CD8-positive, alpha-beta T cell (primary cell): ENCODE measurements at regions of chr12 and their contacts with region 1.

Region 1: GRCh38 chr12:6944381-6945186 is 762 bp downstream of the C12orf57 start:
- DNase-seq: peak; percentile 67 to 94 (median 89)
- ATAC-seq: peak; percentile 51
- H3K4me3 ChIP-seq: peak overlapping the region; percentile 90 to 97
- H3K4me3 Mint-ChIP-seq: peak overlapping the region; percentile 99
- H3K27ac ChIP-seq: peak overlapping the region; percentile 94 to 97
- H3K27ac Mint-ChIP-seq: peak overlapping the region; percentile 100
- H3K4me1 ChIP-seq: peaks cover 56% of the 10 kb centered on the region
- H3K4me1 Mint-ChIP-seq: peaks cover 63% of the 10 kb centered on the region
- H3K27me3 ChIP-seq: no peaks in the 10 kb centered on the region
- H3K27me3 Mint-ChIP-seq: no peaks in the 10 kb centered on the region
- CTCF ChIP-seq: peak; percentile 87

Region 2: DNA sequence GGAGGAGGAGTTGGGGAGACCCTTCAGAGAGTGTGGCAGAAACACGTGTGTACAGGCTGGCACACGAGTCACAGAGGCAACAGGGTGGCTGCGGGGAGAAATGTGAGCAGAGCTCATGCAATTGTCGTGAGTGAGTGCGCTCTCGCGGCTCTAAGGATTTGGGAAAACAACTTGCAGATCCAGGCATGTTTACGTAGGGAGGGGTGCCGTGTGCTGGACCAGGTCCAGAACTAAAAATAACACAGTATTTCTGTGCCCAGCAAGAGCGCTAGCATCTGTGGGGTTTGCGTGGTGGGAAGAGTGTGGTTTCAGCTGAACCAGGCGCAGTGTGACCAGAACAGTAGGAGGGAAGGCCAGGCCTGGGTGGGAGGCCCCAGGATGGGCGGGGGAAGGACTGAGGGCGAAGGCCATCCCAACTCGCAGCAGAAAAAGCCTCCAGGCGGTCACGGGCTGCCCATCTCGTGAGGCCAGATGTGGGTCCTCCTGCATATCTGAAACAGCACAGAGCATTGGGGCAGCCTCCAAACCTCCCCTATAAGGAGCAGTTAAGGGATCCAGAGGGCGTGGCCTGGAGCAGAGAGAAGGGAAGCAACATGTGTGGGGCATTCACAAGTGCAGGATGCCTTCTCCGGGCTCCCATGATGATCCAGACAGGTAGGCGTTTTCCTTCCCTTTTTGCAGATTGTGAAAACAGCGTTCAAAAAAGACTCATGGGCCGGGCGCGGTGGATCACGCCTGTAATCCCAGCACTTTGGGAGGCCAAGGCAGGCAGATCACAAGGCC is 762.3 kb before region 1 on chr12:
- CTCF ChIA-PET with region 1: no interaction called
- POLR2A ChIA-PET with region 1: no interaction called
- intact Hi-C with region 1: no loop called
- DNase-seq: no peak
- ATAC-seq: no peak
- H3K4me3 ChIP-seq: no peak overlapping the region
- H3K4me3 Mint-ChIP-seq: no peak overlapping the region
- H3K27ac ChIP-seq: no peak overlapping the region
- H3K27ac Mint-ChIP-seq: no peak overlapping the region
- H3K4me1 ChIP-seq: no peaks in the 10 kb centered on the region
- H3K4me1 Mint-ChIP-seq: no peaks in the 10 kb centered on the region
- H3K27me3 ChIP-seq: no peaks in the 10 kb centered on the region
- H3K27me3 Mint-ChIP-seq: peaks cover 4% of the 10 kb centered on the region
- CTCF ChIP-seq: no peak

Region 3: GRCh38 chr12:6914246-6914946 is 30.2 kb before region 1 on chr12 and contains the start of gene ENO2:
- CTCF ChIA-PET with region 1: interaction called, 3 read pairs
- POLR2A ChIA-PET with region 1: interaction called, 18 read pairs
- intact Hi-C with region 1: no loop called
- DNase-seq: peak; percentile 59 to 92 (median 89)
- ATAC-seq: peak; percentile 94
- H3K4me3 ChIP-seq: peak within 1 kb of the TSS; percentile 52 to 83
- H3K4me3 Mint-ChIP-seq: peak within 1 kb of the TSS; percentile 95
- H3K27ac ChIP-seq: peak within 1 kb of the TSS; percentile 77 to 88
- H3K27ac Mint-ChIP-seq: peak within 1 kb of the TSS; percentile 95
- H3K4me1 ChIP-seq: peaks cover 18% of the 10 kb centered on the region
- H3K4me1 Mint-ChIP-seq: peaks cover 31% of the 10 kb centered on the region
- H3K27me3 ChIP-seq: no peaks in the 10 kb centered on the region
- H3K27me3 Mint-ChIP-seq: no peaks in the 10 kb centered on the region
- CTCF ChIP-seq: no peak
- total RNA-seq, gene ENO2: 95.5 to 99.6 TPM

Region 4: DNA sequence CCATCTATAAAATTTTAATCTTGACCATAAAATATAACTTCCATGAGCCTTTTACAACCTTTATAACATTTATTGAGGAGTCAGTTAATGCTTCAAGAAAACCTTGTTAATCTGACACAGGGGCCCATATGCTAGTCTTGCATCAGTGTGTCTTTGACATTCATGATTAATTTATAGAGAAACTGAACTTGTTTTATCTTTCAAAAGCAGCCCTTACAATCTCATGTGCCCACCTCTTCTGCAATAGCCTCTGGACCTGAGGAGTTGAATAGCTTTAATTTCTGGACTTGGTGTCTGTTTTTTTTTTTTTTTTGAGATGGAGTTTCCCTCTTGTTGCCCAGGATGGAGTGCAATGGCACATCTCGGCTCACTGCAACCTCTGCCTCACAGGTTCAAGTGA is 82.3 kb after region 1 on chr12:
- CTCF ChIA-PET with region 1: no interaction called
- POLR2A ChIA-PET with region 1: no interaction called
- intact Hi-C with region 1: no loop called
- DNase-seq: no peak
- ATAC-seq: no peak
- H3K4me3 ChIP-seq: no peak overlapping the region
- H3K4me3 Mint-ChIP-seq: no peak overlapping the region
- H3K27ac ChIP-seq: no peak overlapping the region
- H3K27ac Mint-ChIP-seq: no peak overlapping the region
- H3K4me1 ChIP-seq: no peaks in the 10 kb centered on the region
- H3K4me1 Mint-ChIP-seq: no peaks in the 10 kb centered on the region
- H3K27me3 ChIP-seq: no peaks in the 10 kb centered on the region
- H3K27me3 Mint-ChIP-seq: no peaks in the 10 kb centered on the region
- CTCF ChIP-seq: no peak

Region 5: GRCh38 chr12:7092229-7092985 is 147.8 kb after region 1 on chr12 and contains the start of gene C1R:
- CTCF ChIA-PET with region 1: interaction called, 4 read pairs
- POLR2A ChIA-PET with region 1: interaction called, 4 read pairs
- intact Hi-C with region 1: loop called in 1 of 2 experiments (anchors 1 kb)
- DNase-seq: peak; percentile 36 to 81 (median 72)
- ATAC-seq: peak; percentile 89
- H3K4me3 ChIP-seq: peak within 1 kb of the TSS; percentile 49 to 66
- H3K4me3 Mint-ChIP-seq: peak within 1 kb of the TSS; percentile 88
- H3K27ac ChIP-seq: no peak within 1 kb of the TSS
- H3K27ac Mint-ChIP-seq: peak within 1 kb of the TSS; percentile 29
- H3K4me1 ChIP-seq: peaks cover 14% of the 10 kb centered on the region
- H3K4me1 Mint-ChIP-seq: peaks cover 11% of the 10 kb centered on the region
- H3K27me3 ChIP-seq: no peaks in the 10 kb centered on the region
- H3K27me3 Mint-ChIP-seq: no peaks in the 10 kb centered on the region
- CTCF ChIP-seq: peak; percentile 82
- total RNA-seq, gene C1R: 3.8 TPM